ENCODE measurements at regions of chr19 and their contacts with region 1.

Region 1: DNA sequence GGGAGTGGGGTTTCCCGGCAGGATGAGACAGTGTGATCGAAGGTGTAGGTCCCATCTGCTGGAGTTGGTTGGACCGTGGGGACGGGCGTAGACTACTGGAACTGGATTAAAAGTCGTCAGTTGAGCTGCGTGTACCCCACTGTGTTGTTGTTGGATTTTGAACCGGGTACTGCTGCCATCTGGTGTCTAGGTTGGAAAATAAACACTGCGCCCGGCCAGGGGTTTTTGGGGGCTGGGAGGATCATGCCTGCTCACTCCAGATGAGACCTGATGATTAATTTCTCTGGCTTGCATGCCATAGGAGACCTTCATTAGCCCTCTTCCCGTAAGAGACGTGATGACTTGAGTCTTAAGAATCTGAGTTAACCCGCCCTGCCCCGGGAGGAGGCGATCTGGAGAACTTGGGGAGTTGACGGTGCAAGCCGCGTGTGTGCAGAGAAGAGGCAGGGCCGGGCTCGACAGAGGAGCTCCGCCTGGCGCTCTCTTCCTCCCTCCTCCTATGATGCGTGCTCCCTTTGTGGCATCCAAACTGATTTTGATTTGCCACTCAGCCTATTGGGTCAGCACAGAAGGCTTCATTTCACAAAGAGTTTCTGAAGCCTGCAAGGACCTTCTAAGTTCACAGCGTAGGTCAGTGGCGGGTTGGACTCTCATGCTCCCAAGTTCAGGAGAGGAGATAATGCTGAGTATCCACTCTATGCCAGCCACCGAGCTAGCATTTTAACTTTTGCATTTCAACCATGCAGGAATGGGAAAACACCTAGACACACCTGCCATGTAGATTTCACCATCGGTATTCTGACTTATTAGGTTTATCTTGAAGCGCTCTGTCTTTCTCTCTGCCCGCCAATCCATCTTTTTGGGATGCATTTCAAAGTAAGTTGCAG is 2.7 kb downstream of the UHRF1 start:
- DNase-seq: peak; percentile 45 to 83 (median 62)
- ATAC-seq: peak; percentile 24 to 49 (median 37)
- H3K4me3 ChIP-seq: peak overlapping the region; percentile 37 to 41
- H3K4me3 Mint-ChIP-seq: peak overlapping the region; percentile 87 to 99 (median 99)
- H3K27ac ChIP-seq: peak overlapping the region; percentile 60
- H3K27ac Mint-ChIP-seq: peak overlapping the region; percentile 92 to 99
- H3K4me1 ChIP-seq: peaks cover 25 to 84% of the 10 kb centered on the region in 2 experiments
- H3K4me1 Mint-ChIP-seq: peaks cover 59 to 69% (median 63%) of the 10 kb centered on the region in 3 donors
- H3K27me3 ChIP-seq: peaks cover 0 to 4% of the 10 kb centered on the region in 2 experiments
- H3K27me3 Mint-ChIP-seq: no peaks in the 10 kb centered on the region

Region 2: GRCh38 chr19:4831304-4831978 is 80.6 kb before region 1 on chr19 and contains the start of gene TICAM1:
- CTCF ChIA-PET with region 1: interaction called in 1 of 2 experiments, 4 read pairs
- POLR2A ChIA-PET with region 1: interaction called in 1 of 2 experiments, 13 read pairs
- DNase-seq: peak; percentile 35 to 93 (median 75)
- ATAC-seq: peak; percentile 85 to 96 (median 95)
- H3K4me3 ChIP-seq: peak within 1 kb of the TSS; percentile 73 to 83
- H3K4me3 Mint-ChIP-seq: peak within 1 kb of the TSS; percentile 87 to 95 (median 93)
- H3K27ac ChIP-seq: peak within 1 kb of the TSS; percentile 86
- H3K27ac Mint-ChIP-seq: peak within 1 kb of the TSS; percentile 95 to 96
- H3K4me1 ChIP-seq: peaks cover 6 to 30% of the 10 kb centered on the region in 2 experiments
- H3K4me1 Mint-ChIP-seq: peaks cover 24 to 29% (median 27%) of the 10 kb centered on the region in 3 donors
- H3K27me3 ChIP-seq: no peaks in the 10 kb centered on the region
- H3K27me3 Mint-ChIP-seq: no peaks in the 10 kb centered on the region
- total RNA-seq, gene TICAM1: 12.8 to 20.3 (median 16.8) TPM

Region 3: DNA sequence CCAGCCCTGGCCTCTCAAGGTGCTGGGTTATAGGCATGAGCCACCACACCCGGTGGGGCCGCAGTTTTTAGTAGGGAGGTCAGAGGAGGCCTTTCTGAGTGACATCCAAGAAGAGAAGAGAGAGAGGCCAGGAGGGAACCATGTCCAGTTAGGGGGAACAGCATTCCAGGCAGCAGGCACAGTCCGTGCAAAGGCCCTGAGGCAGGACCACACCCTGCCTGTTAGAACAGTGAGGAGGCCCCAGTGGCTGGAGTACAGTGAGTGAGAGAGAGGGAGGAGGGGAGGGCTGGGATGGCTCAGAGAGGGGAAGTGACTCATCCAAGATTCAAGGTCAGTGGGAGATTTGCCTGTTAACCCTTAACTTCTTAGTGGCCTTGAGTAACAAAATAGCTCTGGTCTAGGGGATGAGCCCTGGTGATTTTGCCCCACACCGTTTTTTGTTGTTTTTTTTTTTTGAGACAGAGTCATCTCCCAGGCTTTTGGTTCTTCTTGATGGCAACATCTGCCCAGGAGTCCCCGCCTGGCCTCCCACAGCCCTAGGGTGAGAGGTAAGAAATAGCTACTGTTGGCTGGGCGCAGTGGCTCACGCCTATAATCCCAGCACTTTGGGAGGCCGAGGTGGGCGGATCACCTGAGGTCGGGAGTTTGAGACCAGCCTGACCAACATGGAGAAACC is 41.9 kb before region 1 on chr19:
- CTCF ChIA-PET with region 1: interaction called, 7 to 28 read pairs
- POLR2A ChIA-PET with region 1: interaction called in 1 of 2 experiments, 3 read pairs
- DNase-seq: peak in 1 of 35 experiments; percentile 14
- ATAC-seq: no peak
- H3K4me3 ChIP-seq: no peak overlapping the region
- H3K4me3 Mint-ChIP-seq: no peak overlapping the region
- H3K27ac ChIP-seq: no peak overlapping the region
- H3K27ac Mint-ChIP-seq: no peak overlapping the region
- H3K4me1 ChIP-seq: peaks cover 0 to 29% of the 10 kb centered on the region in 2 experiments
- H3K4me1 Mint-ChIP-seq: peaks cover 9 to 16% (median 16%) of the 10 kb centered on the region in 3 donors
- H3K27me3 ChIP-seq: peaks cover 0 to 12% of the 10 kb centered on the region in 2 experiments
- H3K27me3 Mint-ChIP-seq: peaks cover 0 to 9% of the 10 kb centered on the region in 2 donors

Region 4: DNA sequence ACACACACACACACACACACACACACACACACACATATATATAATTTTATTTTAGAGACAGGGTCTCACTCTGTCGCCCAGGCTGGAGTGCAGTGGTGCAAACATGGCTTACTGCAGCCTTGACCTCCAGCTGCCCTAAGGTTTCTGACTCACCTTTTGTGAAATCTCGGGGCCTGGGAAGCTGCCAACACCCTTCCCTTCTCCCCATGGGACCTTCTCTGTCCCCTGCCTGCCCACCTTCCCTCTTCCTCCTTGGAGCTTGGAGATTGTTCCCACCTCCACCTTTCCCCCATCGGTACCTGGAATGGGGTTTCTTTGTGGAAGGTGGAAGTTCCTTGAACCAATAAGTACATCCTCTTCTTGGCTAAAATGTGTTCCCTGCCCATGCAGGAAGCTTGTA is 15.7 kb before region 1 on chr19:
- CTCF ChIA-PET with region 1: no interaction called
- POLR2A ChIA-PET with region 1: no interaction called
- DNase-seq: no peak
- ATAC-seq: no peak
- H3K4me3 ChIP-seq: no peak overlapping the region
- H3K4me3 Mint-ChIP-seq: no peak overlapping the region
- H3K27ac ChIP-seq: no peak overlapping the region
- H3K27ac Mint-ChIP-seq: no peak overlapping the region
- H3K4me1 ChIP-seq: peaks cover 0 to 2% of the 10 kb centered on the region in 2 experiments
- H3K4me1 Mint-ChIP-seq: peaks cover 0 to 6% (median 6%) of the 10 kb centered on the region in 3 donors
- H3K27me3 ChIP-seq: no peaks in the 10 kb centered on the region
- H3K27me3 Mint-ChIP-seq: no peaks in the 10 kb centered on the region

Measured in T-cell (primary cell).